H1 (cell line): ENCODE measurements at regions of chr15 and their contacts with region 1.

Region 1: GRCh38 chr15:32657198-32657883 is 15.8 kb downstream of the SCG5 start:
- DNase-seq: peak in 1 of 2 experiments; percentile 13
- H3K4me3 ChIP-seq: no peak overlapping the region
- H3K27ac ChIP-seq: no peak overlapping the region
- H3K4me1 ChIP-seq: peaks cover 0 to 7% (median 0%) of the 10 kb centered on the region in 4 experiments; a peak in 4 of 7 replicates
- H3K27me3 ChIP-seq: no peaks in the 10 kb centered on the region; a peak in 1 of 7 replicates
- CTCF ChIP-seq: no peak
- EP300 ChIP-seq: no peak
- POLR2A ChIP-seq: no peak
- RAD21 ChIP-seq: no peak

Region 2: DNA sequence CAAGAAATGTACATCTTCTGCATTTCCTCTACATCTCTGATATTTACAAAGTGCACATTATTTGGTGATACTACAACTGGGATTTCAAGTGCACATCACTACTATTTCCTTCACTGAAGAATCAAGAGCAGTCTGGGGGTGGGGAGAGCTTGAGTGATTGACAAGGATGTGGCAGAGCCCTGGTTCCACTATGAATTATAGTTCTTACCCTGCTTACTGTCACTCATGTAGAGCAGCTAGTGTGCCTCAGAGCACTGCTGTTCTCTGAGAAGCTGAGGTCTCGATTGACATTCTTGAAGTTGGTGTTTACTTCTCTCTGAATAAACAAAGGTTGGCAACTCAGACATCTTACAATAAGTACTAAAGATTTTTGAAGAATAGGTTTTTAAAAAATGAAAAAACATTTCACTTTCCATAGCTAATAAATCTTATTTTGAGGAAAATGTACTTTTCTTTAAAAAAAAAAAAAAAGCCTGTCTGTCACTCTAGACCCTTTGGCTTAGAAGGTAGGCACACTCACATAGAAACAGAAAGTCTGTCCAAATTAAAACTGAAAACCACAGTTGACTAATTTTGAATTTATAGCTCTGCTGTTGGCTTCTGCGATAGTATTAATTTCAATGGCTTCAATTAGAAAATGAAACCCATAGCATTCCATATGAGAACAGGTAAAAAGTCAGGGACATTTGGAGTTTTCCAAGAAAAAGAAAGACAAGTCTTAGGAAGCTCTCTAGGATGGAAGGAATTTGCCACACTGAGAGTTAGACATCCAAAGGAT is 66.0 kb after region 1 on chr15:
- CTCF ChIA-PET with region 1: interaction called, 12 read pairs
- POLR2A ChIA-PET with region 1: no interaction called
- DNase-seq: no peak
- H3K4me3 ChIP-seq: no peak overlapping the region
- H3K27ac ChIP-seq: no peak overlapping the region
- H3K4me1 ChIP-seq: peaks cover 0 to 6% (median 5%) of the 10 kb centered on the region in 4 experiments; a peak in 6 of 7 replicates
- H3K27me3 ChIP-seq: peaks cover 15 to 29% (median 23%) of the 10 kb centered on the region in 4 experiments
- CTCF ChIP-seq: no peak
- EP300 ChIP-seq: no peak
- POLR2A ChIP-seq: no peak
- RAD21 ChIP-seq: no peak

Region 3: DNA sequence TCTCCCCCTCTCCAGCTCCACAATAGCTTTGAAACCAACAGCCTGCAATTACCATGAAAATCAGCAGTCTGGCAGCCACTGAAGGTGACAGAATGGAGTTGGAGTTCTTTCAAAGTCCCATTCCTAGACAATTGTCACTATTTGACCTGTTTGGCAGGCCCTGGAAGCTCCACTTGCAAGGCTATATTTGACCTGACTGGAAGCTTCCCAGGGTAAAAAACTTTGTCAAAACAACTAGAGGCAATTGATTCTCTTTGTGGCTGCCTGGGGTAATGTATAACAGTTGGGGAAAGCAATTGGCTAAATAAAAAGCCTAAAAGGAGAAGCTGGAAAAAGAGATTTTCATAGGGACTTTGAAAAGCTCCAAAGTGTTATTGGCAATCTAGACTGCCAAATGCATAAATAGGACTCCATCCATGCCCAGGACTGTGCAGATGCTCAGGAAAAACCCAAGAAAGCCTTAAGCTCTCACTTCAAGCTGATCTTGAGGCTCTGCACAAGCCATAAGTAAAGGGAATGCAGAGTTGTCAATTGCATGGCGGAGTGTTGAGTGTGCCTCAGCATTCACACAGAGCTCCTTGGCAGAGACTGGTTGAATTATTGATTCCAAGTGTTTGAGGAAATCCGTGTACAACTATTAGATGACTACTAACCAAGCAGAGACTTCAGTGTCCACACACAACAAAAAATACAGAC is 78.8 kb after region 1 on chr15:
- CTCF ChIA-PET with region 1: no interaction called
- POLR2A ChIA-PET with region 1: no interaction called
- DNase-seq: no peak
- H3K4me3 ChIP-seq: no peak overlapping the region
- H3K27ac ChIP-seq: no peak overlapping the region
- H3K4me1 ChIP-seq: peaks cover 0 to 4% (median 2%) of the 10 kb centered on the region in 4 experiments; a peak in 3 of 7 replicates
- H3K27me3 ChIP-seq: no peaks in the 10 kb centered on the region; a peak in 1 of 7 replicates
- CTCF ChIP-seq: no peak
- EP300 ChIP-seq: no peak
- POLR2A ChIP-seq: no peak
- RAD21 ChIP-seq: no peak

Region 4: GRCh38 chr15:32956006-32956405 is 298.7 kb after region 1 on chr15:
- CTCF ChIA-PET with region 1: interaction called, 52 read pairs
- POLR2A ChIA-PET with region 1: no interaction called
- DNase-seq: no peak
- H3K4me3 ChIP-seq: no peak overlapping the region
- H3K27ac ChIP-seq: no peak overlapping the region
- H3K4me1 ChIP-seq: peaks cover 7 to 17% (median 14%) of the 10 kb centered on the region in 4 experiments; a peak in 6 of 7 replicates
- H3K27me3 ChIP-seq: no peaks in the 10 kb centered on the region
- CTCF ChIP-seq: peak in 2 of 3 experiments; percentile 65 to 74; a peak in 3 of 4 replicates
- EP300 ChIP-seq: no peak
- POLR2A ChIP-seq: no peak
- RAD21 ChIP-seq: peak; percentile 70 to 88